ENCODE measurements at regions of chr6 and their contacts with region 1.

Region 1: GRCh38 chr6:31158140-31158862 is at the start of gene TCF19:
- DNase-seq: peak; percentile 98
- ATAC-seq: peak; percentile 93
- H3K4me3 ChIP-seq: peak within 1 kb of the TSS; percentile 90
- H3K27ac ChIP-seq: peak within 1 kb of the TSS; percentile 67
- H3K4me1 ChIP-seq: peaks cover 12% of the 10 kb centered on the region
- H3K27me3 ChIP-seq: no peaks in the 10 kb centered on the region
- CTCF ChIP-seq: no peak
- EP300 ChIP-seq: no peak
- POLR2A ChIP-seq: peak; percentile 66
- RAD21 ChIP-seq: no peak
- polyA plus RNA-seq, gene TCF19: 7.7 to 19.5 TPM

Region 2: GRCh38 chr6:31114540-31114876 is 43.8 kb before region 1 on chr6 and contains the start of gene PSORS1C1:
- CTCF ChIA-PET with region 1: no interaction called
- POLR2A ChIA-PET with region 1: no interaction called
- RAD21 ChIA-PET with region 1: no interaction called
- SMC1A ChIA-PET with region 1: no interaction called
- in situ Hi-C with region 1: no loop called
- intact Hi-C with region 1: no loop called
- DNase-seq: no peak
- ATAC-seq: no peak
- H3K4me3 ChIP-seq: no peak within 1 kb of the TSS
- H3K27ac ChIP-seq: no peak within 1 kb of the TSS
- H3K4me1 ChIP-seq: no peaks in the 10 kb centered on the region
- H3K27me3 ChIP-seq: peaks cover 3 to 4% of the 10 kb centered on the region in 2 experiments; a peak in 3 of 4 replicates
- CTCF ChIP-seq: no peak
- EP300 ChIP-seq: no peak
- POLR2A ChIP-seq: no peak
- RAD21 ChIP-seq: no peak
- polyA plus RNA-seq, gene PSORS1C1: 0.13 to 0.20 TPM

Region 3: GRCh38 chr6:31180502-31180901 is 22.2 kb after region 1 on chr6:
- CTCF ChIA-PET with region 1: interaction called, 17 read pairs
- POLR2A ChIA-PET with region 1: interaction called, 10 read pairs
- RAD21 ChIA-PET with region 1: interaction called, 10 read pairs
- SMC1A ChIA-PET with region 1: interaction called, 21 read pairs
- in situ Hi-C with region 1: no loop called
- intact Hi-C with region 1: no loop called
- DNase-seq: no peak
- ATAC-seq: no peak
- H3K4me3 ChIP-seq: no peak overlapping the region
- H3K27ac ChIP-seq: no peak overlapping the region
- H3K4me1 ChIP-seq: peaks cover 14% of the 10 kb centered on the region
- H3K27me3 ChIP-seq: no peaks in the 10 kb centered on the region
- CTCF ChIP-seq: no peak
- EP300 ChIP-seq: no peak
- POLR2A ChIP-seq: no peak
- RAD21 ChIP-seq: no peak

Region 4: GRCh38 chr6:31187780-31188194 is 29.5 kb after region 1 on chr6:
- CTCF ChIA-PET with region 1: interaction called, 17 read pairs
- POLR2A ChIA-PET with region 1: interaction called, 10 read pairs
- RAD21 ChIA-PET with region 1: interaction called, 12 read pairs
- SMC1A ChIA-PET with region 1: interaction called, 21 read pairs
- in situ Hi-C with region 1: no loop called
- intact Hi-C with region 1: loop called (anchors 2 kb)
- DNase-seq: no peak
- ATAC-seq: no peak
- H3K4me3 ChIP-seq: no peak overlapping the region
- H3K27ac ChIP-seq: no peak overlapping the region
- H3K4me1 ChIP-seq: peaks cover 21% of the 10 kb centered on the region
- H3K27me3 ChIP-seq: no peaks in the 10 kb centered on the region
- CTCF ChIP-seq: no peak
- EP300 ChIP-seq: no peak
- POLR2A ChIP-seq: no peak
- RAD21 ChIP-seq: no peak

Region 5: GRCh38 chr6:31776989-31777666 is 618.8 kb after region 1 on chr6 and contains the start of gene VWA7:
- CTCF ChIA-PET with region 1: no interaction called
- POLR2A ChIA-PET with region 1: no interaction called
- RAD21 ChIA-PET with region 1: no interaction called
- SMC1A ChIA-PET with region 1: no interaction called
- in situ Hi-C with region 1: no loop called
- intact Hi-C with region 1: no loop called
- DNase-seq: peak; percentile 70
- ATAC-seq: peak; percentile 95
- H3K4me3 ChIP-seq: no peak within 1 kb of the TSS
- H3K27ac ChIP-seq: peak within 1 kb of the TSS; percentile 37; the same call in 1 of the 2 replicates
- H3K4me1 ChIP-seq: peaks cover 18% of the 10 kb centered on the region
- H3K27me3 ChIP-seq: no peaks in the 10 kb centered on the region
- CTCF ChIP-seq: no peak
- EP300 ChIP-seq: peak; percentile 33 to 39; a peak in 2 of 4 replicates
- POLR2A ChIP-seq: peak; percentile 72
- RAD21 ChIP-seq: no peak
- polyA plus RNA-seq, gene VWA7: 0.11 TPM in 1 of 2 experiments, not detected in the other

Measured in GM12878 (cell line).